Activated CD4-positive, alpha-beta T cell treated with anti-CD3 and anti-CD28 coated beads, Interleukin-2, amount 10 ng/mL, durations not matched to agents 24 days and 14 days (primary cell): ENCODE measurements at regions of chr6 and their contacts with region 1.

Region 1: GRCh38 chr6:132813173-132813856 is 1.1 kb upstream of the RPS12 start:
- DNase-seq: peak; percentile 80
- H3K4me3 Mint-ChIP-seq: peak overlapping the region; percentile 99
- H3K27ac Mint-ChIP-seq: peak overlapping the region; percentile 100
- H3K4me1 Mint-ChIP-seq: peaks cover 41% of the 10 kb centered on the region
- H3K27me3 Mint-ChIP-seq: peaks cover 16% of the 10 kb centered on the region

Region 2: DNA sequence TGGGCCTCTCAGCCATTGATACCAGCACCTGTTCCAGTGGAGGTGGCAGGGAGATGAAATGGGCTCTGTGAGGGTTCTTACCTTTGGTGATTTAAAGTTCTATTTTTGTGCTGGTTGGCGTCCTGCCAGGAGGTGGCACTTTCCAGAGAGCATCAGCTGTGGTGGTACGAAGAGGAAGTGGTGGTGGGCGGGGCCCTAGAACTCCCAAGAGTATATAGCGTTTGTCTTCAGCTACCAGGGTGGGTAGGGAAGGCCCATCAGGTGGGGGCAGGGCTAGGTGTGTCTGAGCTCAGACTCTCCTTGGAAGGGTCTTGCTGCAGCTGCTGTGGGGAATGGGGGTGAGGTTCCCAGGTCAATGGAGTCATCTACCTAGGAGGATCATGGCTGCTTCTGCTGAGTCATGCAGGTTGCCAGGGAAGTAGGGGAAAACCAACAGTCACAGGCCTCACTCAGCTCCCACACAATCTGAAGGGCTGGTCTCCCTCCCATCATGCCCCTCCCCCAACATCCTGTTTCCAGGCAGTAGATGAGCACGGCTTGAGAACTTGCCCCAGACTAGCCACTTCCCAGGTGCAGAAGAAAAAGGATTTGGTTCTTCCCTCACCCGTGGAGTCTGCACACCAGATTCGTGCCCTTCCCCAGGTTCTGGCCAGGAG is 458.7 kb before region 1 on chr6:
- intact Hi-C with region 1: loop called (anchors 10 kb)
- DNase-seq: peak; percentile 73
- H3K4me3 Mint-ChIP-seq: peak overlapping the region; percentile 22
- H3K27ac Mint-ChIP-seq: peak overlapping the region; percentile 74
- H3K4me1 Mint-ChIP-seq: peaks cover 35% of the 10 kb centered on the region
- H3K27me3 Mint-ChIP-seq: peaks cover 6% of the 10 kb centered on the region

Region 3: DNA sequence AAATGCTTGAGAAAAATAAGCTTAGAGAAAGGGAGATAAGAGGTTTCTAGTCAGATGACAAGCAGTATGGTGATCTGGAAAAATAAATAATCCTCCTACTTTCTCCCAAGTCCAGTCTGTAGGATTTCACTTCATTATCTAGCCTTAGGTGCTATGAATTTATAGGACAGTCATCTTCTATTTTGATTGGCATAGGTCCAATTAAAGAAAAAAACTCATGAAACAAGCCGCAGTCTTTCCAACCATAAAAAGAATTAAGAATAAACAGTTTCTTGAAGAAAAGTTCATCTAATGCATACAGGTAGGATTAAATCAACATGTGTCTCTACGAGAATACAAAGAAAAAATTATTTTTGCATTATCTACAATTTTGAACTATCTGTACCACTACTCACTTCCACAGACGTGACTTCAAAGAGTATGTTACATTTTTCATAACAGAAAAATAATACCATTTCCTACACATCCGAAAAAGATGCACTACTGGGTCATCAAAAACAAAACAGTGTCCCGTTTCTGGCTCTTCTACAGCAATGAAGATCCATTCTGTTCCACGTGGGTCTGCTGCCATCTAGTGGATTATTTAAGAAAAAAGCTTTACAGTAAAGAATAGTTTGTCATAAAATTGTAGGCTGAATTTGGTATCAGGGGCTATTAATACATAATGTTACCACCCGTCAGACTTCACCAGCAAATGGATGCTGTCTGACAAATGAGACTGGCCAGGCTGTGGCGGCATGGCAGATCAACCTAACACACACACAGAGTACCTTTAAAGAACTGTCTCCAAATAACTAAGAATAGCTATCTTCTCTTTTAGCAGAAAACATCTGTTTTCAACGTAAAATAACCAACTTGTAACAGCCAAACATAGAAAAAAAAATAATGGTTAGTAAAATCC is 329.3 kb before region 1 on chr6:
- intact Hi-C with region 1: no loop called
- DNase-seq: peak; percentile 86
- H3K4me3 Mint-ChIP-seq: no peak overlapping the region
- H3K27ac Mint-ChIP-seq: no peak overlapping the region
- H3K4me1 Mint-ChIP-seq: peaks cover 10% of the 10 kb centered on the region
- H3K27me3 Mint-ChIP-seq: no peaks in the 10 kb centered on the region

Region 4: GRCh38 chr6:132530293-132530974 is 282.9 kb before region 1 on chr6:
- intact Hi-C with region 1: loop called (anchors 5 kb)
- DNase-seq: peak; percentile 90
- H3K4me3 Mint-ChIP-seq: no peak overlapping the region
- H3K27ac Mint-ChIP-seq: no peak overlapping the region
- H3K4me1 Mint-ChIP-seq: no peaks in the 10 kb centered on the region
- H3K27me3 Mint-ChIP-seq: peaks cover 23% of the 10 kb centered on the region

Region 5: GRCh38 chr6:132798869-132799538 is 14.3 kb before region 1 on chr6:
- intact Hi-C with region 1: loop called (anchors 1 kb)
- DNase-seq: peak; percentile 88
- H3K4me3 Mint-ChIP-seq: peak overlapping the region; percentile 92
- H3K27ac Mint-ChIP-seq: no peak overlapping the region
- H3K4me1 Mint-ChIP-seq: peaks cover 7% of the 10 kb centered on the region
- H3K27me3 Mint-ChIP-seq: peaks cover 5% of the 10 kb centered on the region

Region 6: GRCh38 chr6:133952815-133953633 is 1139.7 kb after region 1 on chr6 and contains the start of gene TBPL1:
- intact Hi-C with region 1: loop called (anchors 10 kb)
- DNase-seq: peak; percentile 95
- H3K4me3 Mint-ChIP-seq: peak within 1 kb of the TSS; percentile 98
- H3K27ac Mint-ChIP-seq: peak within 1 kb of the TSS; percentile 89
- H3K4me1 Mint-ChIP-seq: peaks cover 39% of the 10 kb centered on the region
- H3K27me3 Mint-ChIP-seq: peaks cover 10% of the 10 kb centered on the region
- total RNA-seq, gene TBPL1: 37.2 and 40.0 TPM in 2 replicates